Prostate gland (tissue), 2 donors: ENCODE measurements at regions of chr10 and their contacts with region 1.

Region 1: DNA sequence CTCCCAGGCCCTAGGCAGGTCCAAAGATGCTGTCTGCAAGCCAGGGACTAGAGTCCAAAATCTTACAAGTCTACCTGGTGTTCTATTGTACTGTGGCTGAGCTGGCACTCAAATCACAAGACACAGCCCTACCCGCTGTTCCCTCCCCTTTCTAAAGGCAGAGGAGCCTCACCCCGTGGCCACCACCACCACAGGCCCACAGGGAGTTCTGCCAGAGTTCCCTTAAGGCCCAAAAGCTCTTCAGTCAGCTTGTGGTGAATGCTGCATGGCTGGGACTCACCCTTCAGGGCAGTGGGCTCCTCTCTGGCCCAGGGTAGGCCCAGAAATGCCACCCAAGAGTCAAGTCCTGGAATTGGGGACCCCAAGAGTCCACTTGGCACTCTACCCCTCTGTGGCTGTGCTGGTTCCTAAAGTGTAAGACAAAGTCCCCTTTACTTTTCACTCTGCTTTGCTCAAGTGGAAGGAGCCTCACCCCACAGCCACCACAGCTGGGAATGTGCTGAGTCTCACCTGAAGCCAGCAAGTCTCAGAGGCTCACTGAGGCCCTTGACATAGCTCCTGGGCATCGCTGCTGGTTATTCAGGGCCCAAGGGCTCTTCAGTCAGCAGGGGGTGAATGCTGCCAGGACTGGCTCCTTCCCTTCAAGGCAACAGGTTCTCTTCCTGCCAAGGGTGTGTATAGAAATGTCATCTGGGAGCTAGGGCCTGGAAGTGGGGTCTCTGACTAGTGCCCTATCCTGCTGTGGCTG is 48.8 kb upstream of the PSAP start:
- DNase-seq: no peak
- H3K4me3 ChIP-seq: no peak overlapping the region
- H3K27ac ChIP-seq: no peak overlapping the region
- H3K4me1 ChIP-seq: no peaks in the 10 kb centered on the region
- H3K27me3 ChIP-seq: no peaks in the 10 kb centered on the region
- CTCF ChIP-seq: no peak
- POLR2A ChIP-seq: no peak

Region 2: DNA sequence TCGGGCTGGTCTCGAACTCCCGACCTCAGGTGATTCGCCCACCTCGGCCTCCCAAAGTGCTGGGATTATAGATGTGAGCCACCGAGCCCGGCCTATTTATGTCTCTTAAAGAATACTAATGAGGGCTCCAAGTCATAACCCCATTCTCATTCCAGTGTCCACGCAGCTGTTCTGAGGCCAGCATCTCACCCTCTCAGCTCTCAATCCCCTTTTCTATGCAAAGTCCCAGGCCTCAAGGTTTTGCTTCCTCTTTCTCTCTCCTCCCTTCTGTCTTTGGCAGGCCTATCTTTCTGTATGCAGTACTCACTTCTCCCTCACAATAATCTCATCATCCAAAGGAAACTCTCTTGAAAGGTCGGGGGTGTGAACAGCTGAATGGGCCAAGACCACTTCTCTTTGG is 98.5 kb before region 1 on chr10:
- intact Hi-C with region 1: no loop called
- DNase-seq: no peak
- H3K4me3 ChIP-seq: no peak overlapping the region
- H3K27ac ChIP-seq: no peak overlapping the region
- H3K4me1 ChIP-seq: no peaks in the 10 kb centered on the region
- H3K27me3 ChIP-seq: no peaks in the 10 kb centered on the region
- CTCF ChIP-seq: no peak
- POLR2A ChIP-seq: no peak

Region 3: GRCh38 chr10:71957546-71958275 is 57.9 kb after region 1 on chr10:
- intact Hi-C with region 1: loop called (anchors 5 kb)
- DNase-seq: no peak
- H3K4me3 ChIP-seq: no peak overlapping the region
- H3K27ac ChIP-seq: no peak overlapping the region
- H3K4me1 ChIP-seq: no peaks in the 10 kb centered on the region
- H3K27me3 ChIP-seq: no peaks in the 10 kb centered on the region
- CTCF ChIP-seq: no peak
- POLR2A ChIP-seq: no peak